IMR-90 (cell line): ENCODE measurements at regions of chr15 and their contacts with region 1.

Region 1: DNA sequence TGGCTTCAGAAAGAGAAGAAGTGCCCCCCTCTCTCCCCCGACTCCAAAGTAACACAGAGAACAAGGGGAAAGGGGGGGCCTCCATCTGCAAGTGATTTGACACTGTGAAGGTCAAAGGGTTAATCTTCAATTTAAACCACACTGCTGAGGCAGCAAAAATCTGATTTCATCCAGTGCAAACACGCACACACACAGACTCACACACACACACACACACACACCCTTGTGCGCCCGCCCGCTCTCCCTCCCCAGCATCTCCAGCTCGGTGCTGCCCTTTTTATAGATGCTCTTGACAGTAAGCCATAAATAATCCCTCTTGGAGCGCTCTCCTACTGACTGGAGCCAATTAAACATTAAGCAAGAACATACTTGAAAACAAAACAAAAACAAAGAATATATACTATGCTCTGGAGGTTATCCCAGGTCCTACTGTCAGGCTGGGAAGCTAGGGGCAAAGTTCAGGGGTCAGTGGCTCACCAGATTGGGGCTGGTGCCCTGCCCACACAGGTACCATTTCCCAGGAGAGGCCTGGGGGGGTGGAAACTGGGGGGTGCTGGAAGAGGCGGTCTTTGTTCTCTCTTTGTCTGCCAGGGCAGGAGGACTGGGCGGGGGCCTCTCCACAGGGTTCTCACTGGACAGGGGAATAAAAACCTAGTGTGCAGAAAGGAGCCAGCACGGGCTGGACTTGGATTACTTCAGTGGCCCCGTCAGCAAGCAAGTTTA is 16.3 kb downstream of the BMF start:
- DNase-seq: peak; percentile 86
- ATAC-seq: peak; percentile 75
- H3K4me3 ChIP-seq: no peak overlapping the region
- H3K27ac ChIP-seq: peak overlapping the region; percentile 95
- H3K4me1 ChIP-seq: peaks cover 58% of the 10 kb centered on the region
- H3K27me3 ChIP-seq: no peaks in the 10 kb centered on the region
- CTCF ChIP-seq: no peak
- POLR2A ChIP-seq: no peak
- RAD21 ChIP-seq: no peak

Region 2: DNA sequence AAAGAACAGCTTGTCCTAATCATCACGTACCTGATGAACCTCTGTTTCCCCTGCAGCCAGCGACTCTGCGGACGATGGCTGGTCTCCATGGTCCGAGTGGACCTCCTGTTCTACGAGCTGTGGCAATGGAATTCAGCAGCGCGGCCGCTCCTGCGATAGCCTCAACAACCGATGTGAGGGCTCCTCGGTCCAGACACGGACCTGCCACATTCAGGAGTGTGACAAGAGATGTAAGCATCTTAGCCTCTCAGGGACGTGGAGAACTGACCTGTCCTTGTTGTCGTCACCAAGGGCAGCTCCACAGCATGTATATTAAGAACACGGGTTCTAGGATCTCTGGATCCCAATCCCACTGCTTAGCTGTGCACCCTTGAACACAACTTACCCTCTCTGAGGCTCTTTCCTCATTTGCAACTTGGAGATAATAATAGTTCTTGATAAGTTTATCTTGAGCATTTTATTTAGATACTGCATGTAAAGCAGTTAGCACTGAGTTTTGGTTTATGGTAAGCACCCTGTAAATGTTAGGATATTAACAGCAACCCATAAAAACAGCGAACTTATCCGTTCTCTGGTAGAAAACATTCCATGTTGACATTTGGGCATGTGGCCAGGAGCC is 505.0 kb before region 1 on chr15:
- CTCF ChIA-PET with region 1: no interaction called
- POLR2A ChIA-PET with region 1: interaction called, 12 read pairs
- dilution Hi-C with region 1: no loop called
- in situ Hi-C with region 1: no loop called
- intact Hi-C with region 1: no loop called
- DNase-seq: peak; percentile 47
- ATAC-seq: peak; percentile 0; the same call in 1 of the 2 replicates
- H3K4me3 ChIP-seq: no peak overlapping the region
- H3K27ac ChIP-seq: no peak overlapping the region
- H3K4me1 ChIP-seq: no peaks in the 10 kb centered on the region
- H3K27me3 ChIP-seq: no peaks in the 10 kb centered on the region
- CTCF ChIP-seq: no peak
- POLR2A ChIP-seq: peak; percentile 12
- RAD21 ChIP-seq: no peak

Region 3: DNA sequence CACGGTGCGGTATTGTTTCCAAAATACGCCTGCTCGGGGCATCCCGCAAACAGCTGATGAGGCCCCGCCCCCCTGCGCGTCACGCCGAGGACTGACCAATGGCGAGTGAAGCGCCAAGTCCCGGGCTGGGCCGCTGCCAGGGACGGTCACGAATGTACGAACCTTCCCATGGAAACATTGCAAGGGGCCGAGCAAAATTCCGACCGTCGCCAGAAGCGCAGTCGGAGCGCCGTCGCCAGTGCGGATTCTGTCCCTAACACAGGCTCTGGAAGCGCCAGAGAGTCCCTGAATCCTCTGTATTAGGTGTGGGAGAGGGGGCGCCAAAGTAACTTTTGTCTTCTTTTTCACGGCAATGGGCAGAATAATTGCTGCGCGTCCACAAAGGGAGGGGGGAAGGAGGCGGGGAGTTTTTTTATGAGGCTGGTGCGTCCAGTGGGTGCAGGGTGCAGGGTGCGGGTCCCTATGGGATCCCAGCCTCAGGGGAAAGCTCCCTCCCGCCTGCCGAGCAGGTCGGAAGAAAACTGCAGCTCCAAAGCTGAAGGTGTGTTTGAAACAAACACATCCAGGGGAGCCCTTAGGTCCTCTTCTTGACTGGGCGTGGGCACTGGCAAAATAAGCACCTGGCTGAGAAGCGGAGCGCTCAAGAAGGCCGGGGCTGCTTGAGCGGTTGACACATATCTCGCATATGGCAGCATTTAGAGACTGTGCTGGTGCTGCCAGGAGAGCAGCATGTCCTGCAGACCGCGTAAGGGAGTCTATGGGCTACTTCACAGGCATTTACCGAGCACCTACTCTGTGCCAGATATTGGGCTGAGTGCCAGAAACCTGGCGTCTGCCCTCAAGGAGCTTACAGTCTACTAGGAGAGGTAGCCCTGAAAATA is 16.7 kb after region 1 on chr15 and contains the start of gene BMF:
- CTCF ChIA-PET with region 1: interaction called, 14 read pairs
- POLR2A ChIA-PET with region 1: no interaction called
- dilution Hi-C with region 1: no loop called
- in situ Hi-C with region 1: no loop called
- intact Hi-C with region 1: no loop called
- DNase-seq: peak; percentile 99
- ATAC-seq: peak; percentile 84
- H3K4me3 ChIP-seq: peak within 1 kb of the TSS; percentile 63
- H3K27ac ChIP-seq: no peak within 1 kb of the TSS; the same call in 1 of the 2 replicates
- H3K4me1 ChIP-seq: peaks cover 19% of the 10 kb centered on the region
- H3K27me3 ChIP-seq: peaks cover 17% of the 10 kb centered on the region
- CTCF ChIP-seq: peak; percentile 40
- POLR2A ChIP-seq: no peak; the same call in 1 of the 2 replicates
- RAD21 ChIP-seq: 0 out of 2 replicates have a peak, but pooled peaks have one; percentile 25
- total RNA-seq, gene BMF: 1.7 and 2.9 TPM in 2 replicates

Region 4: GRCh38 chr15:40114218-40114617 is 21.8 kb after region 1 on chr15:
- CTCF ChIA-PET with region 1: interaction called, 14 read pairs
- POLR2A ChIA-PET with region 1: no interaction called
- dilution Hi-C with region 1: no loop called
- in situ Hi-C with region 1: no loop called
- intact Hi-C with region 1: no loop called
- DNase-seq: no peak
- ATAC-seq: no peak
- H3K4me3 ChIP-seq: no peak overlapping the region
- H3K27ac ChIP-seq: no peak overlapping the region
- H3K4me1 ChIP-seq: peaks cover 2% of the 10 kb centered on the region; the same call in 1 of the 2 replicates
- H3K27me3 ChIP-seq: peaks cover 26% of the 10 kb centered on the region
- CTCF ChIP-seq: no peak
- POLR2A ChIP-seq: no peak
- RAD21 ChIP-seq: no peak

Region 5: DNA sequence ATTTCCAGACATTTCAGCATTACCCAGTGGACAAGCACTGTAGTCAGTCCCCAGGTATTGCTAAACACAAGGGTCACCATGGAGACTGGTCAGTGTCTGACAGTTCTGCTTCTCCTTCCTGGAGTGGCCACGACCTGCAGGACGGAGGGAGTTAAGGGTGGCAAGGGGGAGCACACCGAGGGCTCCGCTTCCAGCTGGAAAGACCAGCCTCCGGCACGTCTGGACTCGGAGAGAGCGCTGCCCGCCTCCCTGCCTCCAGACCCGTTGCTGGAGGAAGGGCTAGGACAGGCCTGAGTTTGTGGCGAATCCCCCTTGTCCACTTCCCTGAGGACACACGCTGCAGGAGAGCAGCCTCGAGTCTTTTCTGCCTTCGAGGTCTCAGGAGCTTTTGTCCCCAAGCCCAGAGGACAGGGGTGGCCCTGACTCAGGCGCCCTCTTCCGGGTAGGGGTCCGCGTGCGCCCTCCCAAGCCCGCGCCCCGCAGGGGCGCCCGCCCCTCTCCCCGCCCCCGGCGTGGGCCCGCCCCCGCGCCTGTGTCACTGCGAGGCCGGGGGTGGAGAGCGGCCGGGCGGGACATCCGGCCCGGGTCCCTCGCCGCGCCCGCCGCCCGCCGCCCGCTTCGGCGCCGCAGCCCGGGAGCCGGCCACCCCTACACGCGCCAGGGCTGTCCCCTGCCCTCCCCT is 378.1 kb after region 1 on chr15 and contains the start of gene CHST14:
- CTCF ChIA-PET with region 1: no interaction called
- POLR2A ChIA-PET with region 1: interaction called, 18 read pairs
- dilution Hi-C with region 1: no loop called
- in situ Hi-C with region 1: no loop called
- intact Hi-C with region 1: no loop called
- DNase-seq: peak; percentile 43
- ATAC-seq: peak; percentile 92
- H3K4me3 ChIP-seq: peak within 1 kb of the TSS; percentile 79
- H3K27ac ChIP-seq: peak within 1 kb of the TSS; percentile 91
- H3K4me1 ChIP-seq: peaks cover 12% of the 10 kb centered on the region
- H3K27me3 ChIP-seq: 0 out of 2 replicates have a peak, but pooled peaks cover 1% of the 10 kb centered on the region
- CTCF ChIP-seq: no peak
- POLR2A ChIP-seq: no peak
- RAD21 ChIP-seq: no peak
- total RNA-seq, gene CHST14: 3.3 and 3.8 TPM in 2 replicates

Region 6: DNA sequence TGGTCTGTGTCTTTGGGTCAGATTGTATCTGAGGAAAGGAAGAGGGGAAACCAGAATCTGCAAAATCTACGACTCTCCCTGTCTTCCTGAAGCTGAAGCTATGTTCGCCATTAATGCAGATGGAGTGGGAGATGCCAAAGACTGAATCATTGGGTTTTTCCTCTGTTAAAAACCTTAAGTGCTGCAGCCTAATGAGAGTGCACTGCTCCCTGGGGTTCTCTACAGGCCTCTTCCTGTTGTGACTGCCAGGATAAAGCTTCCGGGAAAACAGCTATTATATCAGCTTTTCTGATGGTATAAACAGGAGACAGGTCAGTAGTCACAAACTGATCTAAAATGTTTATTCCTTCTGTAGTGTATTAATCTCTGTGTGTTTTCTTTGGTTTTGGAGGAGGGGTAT is 638.6 kb after region 1 on chr15:
- CTCF ChIA-PET with region 1: no interaction called
- POLR2A ChIA-PET with region 1: no interaction called
- dilution Hi-C with region 1: no loop called
- in situ Hi-C with region 1: no loop called
- intact Hi-C with region 1: no loop called
- DNase-seq: no peak
- ATAC-seq: no peak
- H3K4me3 ChIP-seq: no peak overlapping the region
- H3K27ac ChIP-seq: no peak overlapping the region
- H3K4me1 ChIP-seq: no peaks in the 10 kb centered on the region
- H3K27me3 ChIP-seq: no peaks in the 10 kb centered on the region
- CTCF ChIP-seq: no peak
- POLR2A ChIP-seq: no peak
- RAD21 ChIP-seq: no peak